PC-3 (cell line): ENCODE measurements at regions of chr7 and their contacts with region 1.

Region 1: GRCh38 chr7:27134392-27134791 is 3.8 kb upstream of the HOXA4 start:
- DNase-seq: peak; percentile 89
- ATAC-seq: peak; percentile 53
- H3K4me3 ChIP-seq: no peak overlapping the region
- H3K27ac ChIP-seq: peak overlapping the region; percentile 87
- H3K4me1 ChIP-seq: peaks cover 45% of the 10 kb centered on the region
- H3K27me3 ChIP-seq: no peaks in the 10 kb centered on the region
- CTCF ChIP-seq: no peak

Region 2: GRCh38 chr7:26910221-26910620 is 224.2 kb before region 1 on chr7:
- CTCF ChIA-PET with region 1: no interaction called
- POLR2A ChIA-PET with region 1: interaction called, 21 read pairs
- intact Hi-C with region 1: no loop called
- DNase-seq: peak; percentile 78
- ATAC-seq: peak; percentile 81
- H3K4me3 ChIP-seq: no peak overlapping the region
- H3K27ac ChIP-seq: peak overlapping the region; percentile 1; the same call in 1 of the 2 replicates
- H3K4me1 ChIP-seq: peaks cover 15% of the 10 kb centered on the region
- H3K27me3 ChIP-seq: no peaks in the 10 kb centered on the region
- CTCF ChIP-seq: no peak

Region 3: GRCh38 chr7:26948617-26949118 is 185.7 kb before region 1 on chr7:
- CTCF ChIA-PET with region 1: no interaction called
- POLR2A ChIA-PET with region 1: no interaction called
- intact Hi-C with region 1: no loop called
- DNase-seq: no peak
- ATAC-seq: no peak
- H3K4me3 ChIP-seq: no peak overlapping the region
- H3K27ac ChIP-seq: no peak overlapping the region
- H3K4me1 ChIP-seq: no peaks in the 10 kb centered on the region
- H3K27me3 ChIP-seq: no peaks in the 10 kb centered on the region
- CTCF ChIP-seq: no peak

Region 4: DNA sequence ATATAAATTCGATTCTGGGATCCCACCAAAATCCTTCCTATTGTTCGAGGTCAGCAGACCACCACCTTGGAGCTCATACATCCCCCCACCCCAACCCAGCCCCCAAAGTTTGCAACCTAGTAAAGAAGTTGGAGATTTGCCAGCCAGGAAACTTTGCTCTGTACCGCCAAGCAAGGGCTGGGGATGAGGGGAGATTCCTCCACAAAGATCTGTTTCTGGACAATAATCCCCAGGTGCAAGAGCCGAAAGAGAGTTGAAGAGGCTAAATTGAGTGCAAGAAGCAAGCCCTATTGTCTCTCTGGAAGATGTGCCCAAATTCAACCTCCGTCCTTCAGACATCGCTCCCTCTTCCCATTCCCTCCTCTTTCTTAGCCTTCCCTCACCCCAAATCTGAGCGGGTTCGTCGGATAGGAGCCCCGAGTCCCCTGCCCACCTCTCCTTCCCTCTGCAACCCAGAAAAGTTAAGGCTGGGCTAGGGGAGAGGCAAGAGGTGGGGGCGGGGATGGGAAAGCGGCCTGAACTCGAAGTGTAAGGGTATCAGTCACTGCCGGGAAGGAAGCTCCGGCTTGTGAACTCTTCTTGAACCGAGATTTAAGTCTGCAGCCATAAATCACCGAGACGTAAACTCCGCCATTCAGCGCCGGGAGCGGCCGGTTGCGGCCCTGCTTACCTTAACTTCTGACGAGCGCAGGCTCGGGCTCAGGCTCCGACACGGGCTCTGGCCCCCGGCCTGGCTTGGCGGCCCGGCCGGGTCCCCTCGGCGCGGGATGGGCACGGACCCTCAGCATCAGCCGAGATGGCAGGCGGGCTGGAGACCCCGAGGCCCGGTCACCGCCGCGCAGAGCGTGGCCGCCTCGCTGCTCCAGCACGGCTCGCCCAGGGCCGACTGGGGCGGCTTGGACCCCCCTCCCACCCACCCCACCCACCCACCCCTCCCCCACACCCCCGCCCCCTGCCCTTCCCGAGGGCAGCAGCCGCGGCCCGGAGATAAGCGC is 21.1 kb before region 1 on chr7:
- CTCF ChIA-PET with region 1: no interaction called
- POLR2A ChIA-PET with region 1: interaction called, 6 read pairs
- intact Hi-C with region 1: loop called (anchors 1 kb)
- DNase-seq: peak; percentile 84
- ATAC-seq: peak; percentile 31
- H3K4me3 ChIP-seq: peak overlapping the region; percentile 99
- H3K27ac ChIP-seq: peak overlapping the region; percentile 99
- H3K4me1 ChIP-seq: peaks cover 59% of the 10 kb centered on the region
- H3K27me3 ChIP-seq: no peaks in the 10 kb centered on the region
- CTCF ChIP-seq: no peak

Region 5: DNA sequence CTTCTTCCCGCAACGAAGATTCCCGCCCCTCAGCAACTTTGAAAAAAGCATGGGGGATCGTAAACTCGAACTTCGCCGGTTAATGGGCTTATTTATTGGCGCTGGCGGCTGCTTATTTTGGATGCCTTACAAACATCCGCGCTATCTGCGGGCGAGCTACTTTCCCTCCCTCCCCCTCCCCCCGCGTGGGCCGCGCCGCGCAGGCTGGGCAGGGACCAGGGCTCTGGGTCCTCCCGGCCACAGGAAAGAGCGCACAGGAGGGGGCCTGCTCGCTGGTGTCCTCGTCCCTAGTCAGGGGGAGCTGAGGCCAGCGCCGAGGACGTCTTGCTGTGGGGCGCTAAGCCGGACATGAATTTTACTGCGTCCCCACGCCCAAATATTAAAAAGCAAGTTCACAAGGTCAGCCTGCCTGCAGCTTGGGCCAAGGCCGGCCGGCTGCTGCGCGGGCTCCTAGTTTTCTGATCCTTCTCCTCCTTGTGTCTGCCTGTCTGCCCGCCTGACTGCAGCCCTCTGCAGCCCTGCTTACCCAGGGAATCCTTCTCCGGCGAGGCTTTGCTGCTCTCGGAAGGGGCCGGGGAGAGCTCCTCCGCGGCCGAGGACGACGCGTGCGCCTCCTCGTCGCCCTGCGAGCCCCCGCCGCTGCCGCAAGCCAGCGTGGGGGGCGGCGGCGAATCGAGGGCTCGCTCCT is 38.6 kb after region 1 on chr7:
- CTCF ChIA-PET with region 1: no interaction called
- POLR2A ChIA-PET with region 1: no interaction called
- intact Hi-C with region 1: no loop called
- DNase-seq: peak; percentile 87
- ATAC-seq: peak; percentile 24
- H3K4me3 ChIP-seq: peak overlapping the region; percentile 84
- H3K27ac ChIP-seq: peak overlapping the region; percentile 97
- H3K4me1 ChIP-seq: peaks cover 21% of the 10 kb centered on the region
- H3K27me3 ChIP-seq: no peaks in the 10 kb centered on the region
- CTCF ChIP-seq: no peak